CD4-positive, alpha-beta T cell (primary cell): ENCODE measurements at regions of chr2 and their contacts with region 1.

Region 1: DNA sequence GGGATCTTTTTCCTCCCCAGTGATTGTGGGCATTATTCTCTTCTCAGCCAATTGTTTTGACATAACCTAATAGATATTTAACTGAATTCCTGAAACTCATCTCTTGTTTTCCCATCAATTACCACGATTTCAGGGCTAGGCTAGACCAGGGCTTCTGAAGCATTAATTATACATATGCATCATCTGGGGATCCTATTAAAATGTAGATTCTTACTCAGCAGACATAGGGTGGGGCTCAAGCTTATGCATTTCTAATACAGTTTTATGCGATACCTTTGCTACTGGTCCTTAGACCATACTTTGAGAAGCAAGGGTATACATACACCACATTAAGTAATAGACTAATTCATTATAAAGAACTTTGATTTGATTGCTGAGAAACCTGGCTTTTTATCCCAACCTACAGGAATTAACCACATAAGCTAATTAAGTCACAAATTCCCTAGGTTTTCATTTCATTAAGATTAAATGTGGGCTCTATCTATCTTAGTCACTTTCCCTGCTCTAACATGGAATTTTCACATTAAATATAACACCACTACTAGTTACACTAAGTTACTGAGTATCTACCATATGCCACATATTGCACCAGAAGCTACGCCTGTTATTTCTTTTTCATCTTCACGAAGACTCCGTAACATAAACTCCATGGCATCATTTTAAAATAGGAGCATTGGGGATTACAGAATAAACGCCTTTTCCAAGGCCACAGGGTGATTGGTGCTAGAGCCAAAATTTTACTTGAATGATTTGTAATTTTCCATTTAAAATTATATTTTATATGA is 417.5 kb downstream of the DPP10 start:
- DNase-seq: no peak
- ATAC-seq: no peak
- H3K4me3 ChIP-seq: no peak overlapping the region
- H3K4me3 Mint-ChIP-seq: no peak overlapping the region
- H3K27ac ChIP-seq: no peak overlapping the region
- H3K27ac Mint-ChIP-seq: no peak overlapping the region
- H3K4me1 ChIP-seq: no peaks in the 10 kb centered on the region
- H3K4me1 Mint-ChIP-seq: no peaks in the 10 kb centered on the region
- H3K27me3 ChIP-seq: no peaks in the 10 kb centered on the region
- H3K27me3 Mint-ChIP-seq: no peaks in the 10 kb centered on the region
- CTCF ChIP-seq: no peak

Region 2: GRCh38 chr2:114925296-114926255 is 65.7 kb after region 1 on chr2:
- CTCF ChIA-PET with region 1: no interaction called
- POLR2A ChIA-PET with region 1: no interaction called
- intact Hi-C with region 1: loop called in 1 of 2 experiments (anchors 2 kb)
- DNase-seq: no peak
- ATAC-seq: no peak
- H3K4me3 ChIP-seq: no peak overlapping the region
- H3K4me3 Mint-ChIP-seq: no peak overlapping the region
- H3K27ac ChIP-seq: no peak overlapping the region
- H3K27ac Mint-ChIP-seq: no peak overlapping the region
- H3K4me1 ChIP-seq: no peaks in the 10 kb centered on the region
- H3K4me1 Mint-ChIP-seq: no peaks in the 10 kb centered on the region
- H3K27me3 ChIP-seq: no peaks in the 10 kb centered on the region
- H3K27me3 Mint-ChIP-seq: no peaks in the 10 kb centered on the region
- CTCF ChIP-seq: no peak

Region 3: GRCh38 chr2:115443539-115444185 is 583.7 kb after region 1 on chr2:
- CTCF ChIA-PET with region 1: no interaction called
- POLR2A ChIA-PET with region 1: no interaction called
- intact Hi-C with region 1: no loop called
- DNase-seq: no peak
- ATAC-seq: no peak
- H3K4me3 ChIP-seq: no peak overlapping the region
- H3K4me3 Mint-ChIP-seq: no peak overlapping the region
- H3K27ac ChIP-seq: no peak overlapping the region
- H3K27ac Mint-ChIP-seq: no peak overlapping the region
- H3K4me1 ChIP-seq: no peaks in the 10 kb centered on the region
- H3K4me1 Mint-ChIP-seq: no peaks in the 10 kb centered on the region
- H3K27me3 ChIP-seq: no peaks in the 10 kb centered on the region
- H3K27me3 Mint-ChIP-seq: no peaks in the 10 kb centered on the region
- CTCF ChIP-seq: no peak